Activated CD8-positive, alpha-beta T cell treated with anti-CD3 and anti-CD28 coated beads for 36 hours (primary cell): ENCODE measurements at regions of chr9 and their contacts with region 1.

Region 1: DNA sequence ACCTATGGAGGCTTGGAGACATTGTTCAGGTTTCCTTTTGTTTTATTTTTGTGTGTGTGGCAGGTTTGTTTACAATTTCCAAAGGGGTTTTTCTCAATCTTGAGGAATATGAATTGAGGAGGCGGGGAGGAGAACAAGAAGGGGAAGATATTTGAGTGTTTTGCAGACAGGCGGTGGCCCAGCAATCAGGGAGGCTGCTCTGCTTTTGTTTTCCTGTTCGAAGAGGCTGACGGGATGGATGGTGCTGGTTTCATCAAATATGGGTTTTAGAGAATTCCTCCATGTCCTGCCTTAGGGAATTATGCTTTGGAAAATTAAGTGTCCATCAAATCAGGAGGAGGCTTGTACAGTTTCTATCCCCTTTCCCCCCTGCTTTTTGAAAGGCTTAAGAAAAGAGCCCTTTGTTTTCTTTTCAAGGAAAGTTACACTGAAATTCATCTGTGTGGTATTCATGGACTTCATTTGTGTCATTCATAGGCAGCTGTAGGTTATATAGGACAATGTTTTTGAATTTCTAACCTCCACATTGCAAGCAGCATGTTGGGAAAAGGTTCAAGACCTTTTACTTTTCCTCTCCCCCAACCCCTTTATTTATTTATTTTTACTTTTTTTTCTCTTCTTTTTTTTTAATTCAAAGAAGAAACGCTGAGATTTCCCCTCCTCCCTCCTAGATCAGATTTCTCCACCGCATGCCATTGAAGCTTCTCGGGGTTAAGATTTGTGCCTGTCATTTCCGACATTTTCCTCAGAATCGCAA is 107.4 kb downstream of the ZNF462 start:
- DNase-seq: no peak
- ATAC-seq: no peak
- H3K4me3 Mint-ChIP-seq: no peak overlapping the region
- H3K27ac Mint-ChIP-seq: no peak overlapping the region
- H3K4me1 Mint-ChIP-seq: peaks cover under 1% of the 10 kb centered on the region
- H3K27me3 Mint-ChIP-seq: peaks cover 2% of the 10 kb centered on the region
- CTCF ChIP-seq: no peak

Region 2: DNA sequence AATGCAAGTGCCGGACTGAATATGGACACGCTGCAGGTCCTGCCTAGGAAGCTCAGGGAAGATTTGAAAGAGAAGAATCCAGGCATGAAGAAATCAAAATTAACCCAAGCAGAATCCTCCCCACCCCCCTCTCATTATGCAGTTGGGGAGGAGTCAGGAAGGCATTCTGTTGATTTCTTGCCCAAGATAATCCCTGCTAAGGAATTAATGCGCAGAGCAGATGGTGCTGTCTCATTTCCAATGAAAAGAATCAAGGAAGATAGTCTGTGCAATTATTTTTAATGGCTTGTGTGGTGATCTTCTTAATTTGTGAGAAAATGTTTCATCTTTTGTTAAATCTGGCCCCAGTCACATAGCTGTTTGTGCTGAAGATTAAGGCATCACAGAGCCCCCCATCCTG is 37.6 kb after region 1 on chr9:
- CTCF ChIA-PET with region 1: no interaction called
- POLR2A ChIA-PET with region 1: no interaction called
- intact Hi-C with region 1: no loop called
- DNase-seq: no peak
- ATAC-seq: no peak
- H3K4me3 Mint-ChIP-seq: no peak overlapping the region
- H3K27ac Mint-ChIP-seq: no peak overlapping the region
- H3K4me1 Mint-ChIP-seq: no peaks in the 10 kb centered on the region
- H3K27me3 Mint-ChIP-seq: no peaks in the 10 kb centered on the region
- CTCF ChIP-seq: no peak

Region 3: GRCh38 chr9:107039542-107039941 is 69.1 kb after region 1 on chr9:
- CTCF ChIA-PET with region 1: no interaction called
- POLR2A ChIA-PET with region 1: no interaction called
- intact Hi-C with region 1: loop called (anchors 10 kb)
- DNase-seq: no peak
- ATAC-seq: no peak
- H3K4me3 Mint-ChIP-seq: no peak overlapping the region
- H3K27ac Mint-ChIP-seq: no peak overlapping the region
- H3K4me1 Mint-ChIP-seq: peaks cover 1% of the 10 kb centered on the region
- H3K27me3 Mint-ChIP-seq: peaks cover 3% of the 10 kb centered on the region
- CTCF ChIP-seq: no peak